Naive thymus-derived CD4-positive, alpha-beta T cell (primary cell): ENCODE measurements at regions of chrX and their contacts with region 1.

Region 1: DNA sequence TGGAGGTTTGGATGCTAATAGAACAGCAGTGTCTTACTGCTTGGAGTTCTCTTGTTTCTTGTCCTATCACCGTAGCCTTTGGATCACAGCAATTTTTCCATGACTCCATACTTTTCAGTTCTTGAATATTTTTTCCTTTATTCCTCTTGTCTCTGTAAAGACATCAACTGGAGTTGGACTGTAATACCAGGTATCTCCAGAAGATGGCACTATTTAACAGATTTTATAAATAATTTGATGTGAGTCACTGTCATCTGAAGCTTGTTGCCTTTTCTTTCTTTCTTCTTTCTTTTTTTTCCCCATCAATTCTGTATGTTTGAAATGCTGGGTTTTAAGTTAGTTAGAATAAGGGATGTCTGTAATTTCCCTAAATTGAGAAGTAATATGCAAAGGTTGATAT is 24.1 kb downstream of the HPRT1 start:
- DNase-seq: peak in 6 of 9 donors; percentile 8 to 44 (median 24)
- ATAC-seq: peak; percentile 54
- H3K4me3 ChIP-seq: no peak overlapping the region
- H3K4me3 Mint-ChIP-seq: no peak overlapping the region
- H3K27ac ChIP-seq: no peak overlapping the region
- H3K27ac Mint-ChIP-seq: no peak overlapping the region
- H3K4me1 ChIP-seq: no peaks in the 10 kb centered on the region
- H3K4me1 Mint-ChIP-seq: peaks cover 0 to 2% (median 0%) of the 10 kb centered on the region in 7 donors
- H3K27me3 ChIP-seq: no peaks in the 10 kb centered on the region
- H3K27me3 Mint-ChIP-seq: no peaks in the 10 kb centered on the region

Region 2: DNA sequence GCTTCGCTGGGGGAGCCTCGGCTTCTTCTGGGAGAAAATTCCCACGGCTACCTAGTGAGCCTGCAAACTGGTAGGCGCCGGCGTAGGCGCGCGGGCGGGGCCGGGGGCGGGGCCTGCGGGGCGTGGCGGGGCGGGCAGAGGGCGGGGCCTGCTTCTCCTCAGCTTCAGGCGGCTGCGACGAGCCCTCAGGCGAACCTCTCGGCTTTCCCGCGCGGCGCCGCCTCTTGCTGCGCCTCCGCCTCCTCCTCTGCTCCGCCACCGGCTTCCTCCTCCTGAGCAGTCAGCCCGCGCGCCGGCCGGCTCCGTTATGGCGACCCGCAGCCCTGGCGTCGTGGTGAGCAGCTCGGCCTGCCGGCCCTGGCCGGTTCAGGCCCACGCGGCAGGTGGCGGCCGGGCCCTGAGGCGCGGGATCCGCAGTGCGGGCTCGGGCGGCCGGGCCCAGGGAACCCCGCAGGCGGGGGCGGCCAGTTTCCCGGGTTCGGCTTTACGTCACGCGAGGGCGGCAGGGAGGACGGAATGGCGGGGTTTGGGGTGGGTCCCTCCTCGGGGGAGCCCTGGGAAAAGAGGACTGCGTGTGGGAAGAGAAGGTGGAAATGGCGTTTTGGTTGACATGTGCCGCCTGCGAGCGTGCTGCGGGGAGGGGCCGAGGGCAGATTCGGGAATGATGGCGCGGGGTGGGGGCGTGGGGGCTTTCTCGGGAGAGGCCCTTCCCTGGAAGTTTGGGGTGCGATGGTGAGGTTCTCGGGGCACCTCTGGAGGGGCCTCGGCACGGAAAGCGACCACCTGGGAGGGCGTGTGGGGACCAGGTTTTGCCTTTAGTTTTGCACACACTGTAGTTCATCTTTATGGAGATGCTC is 23.8 kb before region 1 on chrX and contains the start of gene HPRT1:
- CTCF ChIA-PET with region 1: interaction called, 3 read pairs
- POLR2A ChIA-PET with region 1: interaction called, 10 read pairs
- intact Hi-C with region 1: no loop called
- DNase-seq: peak; percentile 57 to 80 (median 72)
- ATAC-seq: peak; percentile 99
- H3K4me3 ChIP-seq: peak within 1 kb of the TSS; percentile 53
- H3K4me3 Mint-ChIP-seq: peak within 1 kb of the TSS; percentile 78 to 97 (median 91)
- H3K27ac ChIP-seq: peak within 1 kb of the TSS; percentile 80
- H3K27ac Mint-ChIP-seq: peak within 1 kb of the TSS in 8 of 9 donors; percentile 14 to 95 (median 84)
- H3K4me1 ChIP-seq: no peaks in the 10 kb centered on the region
- H3K4me1 Mint-ChIP-seq: peaks cover 0 to 20% (median 10%) of the 10 kb centered on the region in 7 donors
- H3K27me3 ChIP-seq: no peaks in the 10 kb centered on the region
- H3K27me3 Mint-ChIP-seq: no peaks in the 10 kb centered on the region
- total RNA-seq, gene HPRT1: 13.6 to 73.7 (median 14.9) TPM

Region 3: GRCh38 chrX:134764212-134764785 is 280.3 kb after region 1 on chrX:
- CTCF ChIA-PET with region 1: no interaction called
- POLR2A ChIA-PET with region 1: no interaction called
- intact Hi-C with region 1: loop called in 1 of 2 experiments (anchors 1 kb)
- DNase-seq: peak in 4 of 9 donors; percentile 7 to 16 (median 10)
- ATAC-seq: peak; percentile 78
- H3K4me3 ChIP-seq: no peak overlapping the region
- H3K4me3 Mint-ChIP-seq: no peak overlapping the region
- H3K27ac ChIP-seq: no peak overlapping the region
- H3K27ac Mint-ChIP-seq: no peak overlapping the region
- H3K4me1 ChIP-seq: no peaks in the 10 kb centered on the region
- H3K4me1 Mint-ChIP-seq: no peaks in the 10 kb centered on the region
- H3K27me3 ChIP-seq: no peaks in the 10 kb centered on the region
- H3K27me3 Mint-ChIP-seq: no peaks in the 10 kb centered on the region

Region 4: DNA sequence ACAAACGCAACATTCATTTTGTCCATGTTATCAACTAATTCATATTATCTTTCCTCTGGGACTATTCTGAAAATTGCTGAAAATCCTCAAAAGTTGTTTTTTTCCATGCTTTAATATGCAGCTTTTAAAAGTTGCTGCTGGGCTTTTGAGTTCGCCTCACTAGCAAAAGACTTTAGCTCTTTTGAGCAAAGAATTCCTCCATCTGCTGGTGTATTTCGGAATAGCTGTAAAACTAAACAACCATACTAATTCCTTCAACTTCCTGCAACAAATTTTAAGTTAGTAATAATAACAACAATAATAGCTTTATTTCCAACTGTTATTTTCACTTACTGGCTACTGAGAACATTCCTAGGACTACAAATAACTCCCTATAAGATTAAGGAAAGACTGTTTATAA is 298.8 kb after region 1 on chrX:
- CTCF ChIA-PET with region 1: no interaction called
- POLR2A ChIA-PET with region 1: no interaction called
- intact Hi-C with region 1: loop called in 1 of 2 experiments (anchors 2 kb)
- DNase-seq: peak in 3 of 9 donors; percentile 3 to 25 (median 15)
- ATAC-seq: no peak
- H3K4me3 ChIP-seq: no peak overlapping the region
- H3K4me3 Mint-ChIP-seq: no peak overlapping the region
- H3K27ac ChIP-seq: no peak overlapping the region
- H3K27ac Mint-ChIP-seq: no peak overlapping the region
- H3K4me1 ChIP-seq: no peaks in the 10 kb centered on the region
- H3K4me1 Mint-ChIP-seq: no peaks in the 10 kb centered on the region
- H3K27me3 ChIP-seq: no peaks in the 10 kb centered on the region
- H3K27me3 Mint-ChIP-seq: no peaks in the 10 kb centered on the region

Region 5: GRCh38 chrX:134908356-134908755 is 424.3 kb after region 1 on chrX:
- CTCF ChIA-PET with region 1: interaction called, 5 read pairs
- POLR2A ChIA-PET with region 1: no interaction called
- intact Hi-C with region 1: loop called in 1 of 2 experiments (anchors 1 kb)
- DNase-seq: peak in 7 of 9 donors; percentile 20 to 62 (median 47)
- ATAC-seq: peak; percentile 85
- H3K4me3 ChIP-seq: no peak overlapping the region
- H3K4me3 Mint-ChIP-seq: no peak overlapping the region
- H3K27ac ChIP-seq: no peak overlapping the region
- H3K27ac Mint-ChIP-seq: peak overlapping the region; percentile 50 to 91 (median 80)
- H3K4me1 ChIP-seq: no peaks in the 10 kb centered on the region
- H3K4me1 Mint-ChIP-seq: peaks cover 5 to 13% (median 9%) of the 10 kb centered on the region in 7 donors
- H3K27me3 ChIP-seq: no peaks in the 10 kb centered on the region
- H3K27me3 Mint-ChIP-seq: no peaks in the 10 kb centered on the region

Region 6: DNA sequence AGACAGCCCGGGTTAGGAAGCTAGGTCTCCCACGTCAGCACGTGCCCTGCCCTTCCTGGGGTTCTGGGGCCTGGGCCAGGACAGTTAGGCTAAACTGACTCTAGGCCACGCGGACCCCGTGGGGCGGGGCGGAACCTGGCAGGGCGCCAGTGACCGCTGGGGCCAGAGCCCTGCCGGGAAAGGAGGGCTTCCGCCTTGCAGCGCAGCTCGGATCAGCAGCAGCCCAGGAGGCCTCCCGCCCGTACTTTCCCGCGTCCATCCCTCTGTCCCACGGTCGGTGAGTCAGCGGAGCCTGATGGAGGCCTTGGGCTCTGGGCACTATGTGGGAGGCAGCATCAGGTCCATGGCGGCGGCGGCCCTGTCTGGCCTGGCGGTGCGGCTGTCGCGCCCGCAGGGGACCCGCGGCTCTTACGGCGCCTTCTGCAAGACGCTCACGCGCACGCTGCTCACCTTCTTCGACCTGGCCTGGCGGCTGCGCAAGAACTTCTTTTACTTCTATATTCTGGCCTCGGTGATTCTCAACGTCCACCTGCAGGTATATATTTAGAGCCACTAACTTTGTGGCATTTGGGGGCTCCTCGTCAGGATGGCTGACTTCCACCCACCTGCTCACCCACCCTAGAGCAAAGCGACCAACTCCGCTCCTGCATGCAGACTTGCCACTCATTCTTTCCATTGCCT is 506.9 kb after region 1 on chrX and contains the start of gene SMIM10:
- CTCF ChIA-PET with region 1: no interaction called
- POLR2A ChIA-PET with region 1: no interaction called
- intact Hi-C with region 1: loop called in 1 of 2 experiments (anchors 10 kb)
- DNase-seq: peak in 3 of 9 donors; percentile 3 to 46 (median 8)
- ATAC-seq: peak; percentile 57
- H3K4me3 ChIP-seq: no peak within 1 kb of the TSS
- H3K4me3 Mint-ChIP-seq: peak within 1 kb of the TSS; percentile 5 to 86 (median 78)
- H3K27ac ChIP-seq: no peak within 1 kb of the TSS
- H3K27ac Mint-ChIP-seq: peak within 1 kb of the TSS in 1 of 9 donors; percentile 68
- H3K4me1 ChIP-seq: peaks cover 0 to 4% of the 10 kb centered on the region in 2 donors
- H3K4me1 Mint-ChIP-seq: peaks cover 0 to 12% (median 10%) of the 10 kb centered on the region in 7 donors
- H3K27me3 ChIP-seq: peaks cover 0 to 10% of the 10 kb centered on the region in 2 donors
- H3K27me3 Mint-ChIP-seq: peaks cover 18 to 30% (median 24%) of the 10 kb centered on the region in 5 donors
- total RNA-seq, gene SMIM10: not detected